ENCODE measurements at regions of chr19 and their contacts with region 1.

Region 1: GRCh38 chr19:40603389-40604135 is 2.4 kb downstream of the LTBP4 start:
- DNase-seq: peak; percentile 95
- ATAC-seq: peak; percentile 71
- H3K4me3 Mint-ChIP-seq: peak overlapping the region; percentile 95
- H3K27ac Mint-ChIP-seq: peak overlapping the region; percentile 91
- H3K4me1 Mint-ChIP-seq: peaks cover 42% of the 10 kb centered on the region
- H3K27me3 Mint-ChIP-seq: peaks cover 39% of the 10 kb centered on the region

Region 2: DNA sequence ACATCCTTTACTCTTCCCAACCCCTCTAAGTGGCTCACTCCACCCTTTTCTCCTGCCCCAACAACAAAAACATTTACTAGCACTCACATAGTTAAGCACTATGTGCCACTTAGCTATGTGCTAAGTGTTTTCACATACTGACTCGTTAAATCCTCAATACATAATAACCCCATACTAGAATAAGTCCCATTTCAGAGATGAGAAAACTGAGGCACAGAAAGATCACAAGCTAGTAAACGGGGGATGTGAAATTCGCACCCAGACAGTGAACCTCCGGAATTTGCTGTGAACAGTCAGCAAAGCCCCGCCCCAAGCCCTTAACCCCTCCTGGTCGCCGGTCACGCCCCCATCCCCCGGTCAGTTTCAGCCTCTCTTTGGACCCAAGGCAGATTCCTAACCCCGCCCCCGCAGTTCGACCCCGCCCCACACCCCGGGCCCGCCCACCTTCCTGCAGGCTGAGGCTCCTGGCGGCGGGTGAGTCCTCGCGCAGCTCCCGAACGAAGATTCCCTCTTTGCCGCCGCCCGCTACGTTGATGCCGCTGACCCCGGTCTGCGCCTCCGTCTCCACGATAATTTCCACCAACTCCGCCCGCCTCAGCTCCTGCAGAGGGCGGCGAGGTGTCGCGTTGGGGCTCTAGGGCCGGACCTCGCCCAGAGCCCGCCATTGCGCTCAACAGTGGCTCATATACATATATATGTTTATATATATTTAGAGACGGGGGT is 200.1 kb before region 1 on chr19:
- POLR2A ChIA-PET with region 1: interaction called, 10 read pairs
- DNase-seq: peak; percentile 89
- ATAC-seq: peak; percentile 63
- H3K4me3 Mint-ChIP-seq: peak overlapping the region; percentile 94
- H3K27ac Mint-ChIP-seq: peak overlapping the region; percentile 76
- H3K4me1 Mint-ChIP-seq: peaks cover 21% of the 10 kb centered on the region
- H3K27me3 Mint-ChIP-seq: peaks cover 16% of the 10 kb centered on the region

Region 3: GRCh38 chr19:40613640-40614303 is 10.2 kb after region 1 on chr19:
- POLR2A ChIA-PET with region 1: interaction called, 38 read pairs
- DNase-seq: peak; percentile 85
- ATAC-seq: peak; percentile 61
- H3K4me3 Mint-ChIP-seq: peak overlapping the region; percentile 95
- H3K27ac Mint-ChIP-seq: peak overlapping the region; percentile 96
- H3K4me1 Mint-ChIP-seq: peaks cover 28% of the 10 kb centered on the region
- H3K27me3 Mint-ChIP-seq: no peaks in the 10 kb centered on the region

Region 4: DNA sequence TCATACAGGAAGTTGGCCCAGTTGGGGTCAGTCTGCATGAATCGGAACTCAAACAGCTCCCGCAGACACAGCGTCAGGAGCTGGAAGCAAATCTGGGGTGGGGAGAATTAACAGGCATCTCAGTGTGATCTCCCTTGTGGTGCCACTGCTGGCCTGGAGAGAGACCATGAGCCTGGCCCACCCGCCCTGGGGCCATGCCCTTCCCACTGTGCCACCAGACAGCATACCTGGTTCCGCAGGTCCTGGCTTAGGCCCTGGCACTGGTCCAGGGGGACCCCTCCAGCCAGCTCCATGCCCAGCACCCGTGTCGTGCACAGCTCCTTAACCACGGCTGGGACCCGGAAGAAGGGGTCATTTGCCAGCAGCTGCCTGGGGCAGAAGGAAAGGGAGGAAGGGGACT is 96.5 kb after region 1 on chr19:
- POLR2A ChIA-PET with region 1: no interaction called
- DNase-seq: no peak
- ATAC-seq: no peak
- H3K4me3 Mint-ChIP-seq: no peak overlapping the region
- H3K27ac Mint-ChIP-seq: no peak overlapping the region
- H3K4me1 Mint-ChIP-seq: no peaks in the 10 kb centered on the region
- H3K27me3 Mint-ChIP-seq: no peaks in the 10 kb centered on the region

Measured in activated naive CD8-positive, alpha-beta T cell treated with anti-CD3 and anti-CD28 coated beads, Interleukin-2, amount 10 ng/mL, durations not matched to agents 7 days and 5 days (primary cell).